ENCODE measurements at regions of chr17 and their contacts with region 1.

Region 1: DNA sequence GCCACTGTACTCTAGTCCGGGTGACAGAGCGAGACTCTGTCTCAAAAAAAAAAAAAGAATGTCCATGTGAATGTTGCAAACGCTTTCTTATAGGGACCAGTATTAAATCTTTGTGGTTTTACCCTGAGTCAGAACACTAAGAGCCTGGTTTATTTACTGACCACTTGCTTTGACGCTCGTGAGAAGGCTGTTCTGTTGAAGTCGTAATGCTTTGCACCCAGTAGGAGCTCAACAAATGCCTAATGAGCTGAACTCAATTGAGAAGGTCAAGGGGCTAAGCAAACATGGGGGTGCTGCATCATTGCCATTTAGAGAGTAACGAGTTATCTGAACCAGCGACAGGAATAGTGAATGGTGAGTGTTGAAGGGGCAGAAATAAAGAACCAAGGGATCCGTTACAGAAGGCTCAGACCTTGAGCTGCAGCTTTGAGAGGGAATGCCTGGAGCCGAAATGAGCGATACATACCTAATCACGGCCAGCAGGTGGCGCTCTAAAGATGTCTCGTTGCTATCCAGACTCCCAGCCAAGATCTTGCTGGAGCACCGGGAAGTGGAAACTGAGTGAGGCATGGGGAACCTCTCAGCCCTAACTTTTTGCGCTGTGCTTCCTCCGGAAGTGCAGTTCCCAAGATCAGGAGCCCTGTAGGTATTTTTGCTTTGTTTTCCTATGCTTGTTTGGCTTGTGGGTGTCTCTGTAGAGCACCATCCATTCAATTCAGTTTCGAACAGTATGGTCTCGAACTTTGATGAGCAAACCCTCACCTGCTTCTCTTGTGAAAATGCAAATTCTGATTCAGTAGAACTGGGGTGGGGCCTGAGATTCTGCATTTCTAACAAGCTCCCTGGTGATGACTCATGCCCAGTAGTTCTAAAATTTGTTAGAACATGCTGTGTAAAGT is 12.6 kb upstream of the RNF222 start:
- DNase-seq: peak; percentile 65 to 91 (median 75)
- ATAC-seq: peak; percentile 85
- H3K4me3 ChIP-seq: no peak overlapping the region
- H3K4me3 Mint-ChIP-seq: no peak overlapping the region
- H3K27ac ChIP-seq: no peak overlapping the region
- H3K27ac Mint-ChIP-seq: no peak overlapping the region
- H3K4me1 ChIP-seq: peaks cover 16% of the 10 kb centered on the region
- H3K4me1 Mint-ChIP-seq: peaks cover 10% of the 10 kb centered on the region
- H3K27me3 ChIP-seq: peaks cover 0 to 7% of the 10 kb centered on the region in 2 experiments
- H3K27me3 Mint-ChIP-seq: peaks cover 9% of the 10 kb centered on the region
- CTCF ChIP-seq: peak; percentile 96

Region 2: DNA sequence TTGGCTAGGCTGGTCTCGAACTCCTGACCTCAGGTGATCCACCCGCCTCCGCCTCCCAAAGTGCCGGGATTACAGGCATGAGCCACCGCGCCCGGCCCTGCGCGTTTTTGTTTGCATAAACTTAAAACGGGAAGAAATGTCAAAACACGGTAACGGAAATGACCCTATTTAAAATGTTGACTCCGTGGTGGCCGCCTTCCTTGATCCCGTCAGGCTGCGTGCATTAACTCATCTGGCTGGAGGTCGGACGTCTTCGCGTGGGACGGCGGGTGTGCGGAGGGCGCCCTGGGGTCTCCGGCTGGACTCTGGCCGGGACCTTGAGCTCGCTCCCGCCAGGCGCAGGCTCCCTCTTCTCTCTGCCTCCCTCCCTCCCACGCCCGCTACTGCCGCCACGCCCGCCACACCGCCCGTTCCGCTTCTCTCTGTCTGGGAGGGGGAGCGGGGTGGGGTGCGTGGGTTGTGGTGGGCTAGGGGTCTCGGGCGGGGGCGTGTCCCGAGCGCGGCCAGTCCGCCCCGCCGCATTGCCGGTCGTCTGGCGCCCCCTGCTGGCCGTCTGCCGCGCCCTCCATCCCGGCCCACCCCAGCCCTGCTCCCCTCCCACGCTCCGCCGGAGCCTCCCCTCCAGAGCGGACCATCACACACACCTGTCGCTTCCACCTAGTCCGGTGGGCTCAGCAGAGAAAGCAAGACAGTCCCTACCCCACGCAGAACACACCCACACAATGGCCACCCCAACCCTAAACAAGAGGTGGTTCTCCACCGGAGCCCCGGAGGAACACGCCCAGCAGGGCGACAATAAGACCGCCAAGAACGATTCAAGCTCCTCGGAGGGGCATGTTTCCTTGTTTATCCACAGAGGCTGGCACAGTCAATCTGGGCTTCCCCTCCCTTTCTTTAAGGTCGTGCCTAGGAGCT is 335.6 kb after region 1 on chr17:
- CTCF ChIA-PET with region 1: interaction called, 11 read pairs
- POLR2A ChIA-PET with region 1: interaction called, 6 read pairs
- intact Hi-C with region 1: loop called (anchors 1 to 2 kb)
- DNase-seq: peak; percentile 64 to 88 (median 76)
- ATAC-seq: peak; percentile 80
- H3K4me3 ChIP-seq: peak overlapping the region; percentile 78
- H3K4me3 Mint-ChIP-seq: peak overlapping the region; percentile 93
- H3K27ac ChIP-seq: peak overlapping the region; percentile 44 to 51
- H3K27ac Mint-ChIP-seq: peak overlapping the region; percentile 83
- H3K4me1 ChIP-seq: peaks cover 23% of the 10 kb centered on the region
- H3K4me1 Mint-ChIP-seq: peaks cover 12% of the 10 kb centered on the region
- H3K27me3 ChIP-seq: no peaks in the 10 kb centered on the region
- H3K27me3 Mint-ChIP-seq: no peaks in the 10 kb centered on the region
- CTCF ChIP-seq: peak; percentile 99

Region 3: DNA sequence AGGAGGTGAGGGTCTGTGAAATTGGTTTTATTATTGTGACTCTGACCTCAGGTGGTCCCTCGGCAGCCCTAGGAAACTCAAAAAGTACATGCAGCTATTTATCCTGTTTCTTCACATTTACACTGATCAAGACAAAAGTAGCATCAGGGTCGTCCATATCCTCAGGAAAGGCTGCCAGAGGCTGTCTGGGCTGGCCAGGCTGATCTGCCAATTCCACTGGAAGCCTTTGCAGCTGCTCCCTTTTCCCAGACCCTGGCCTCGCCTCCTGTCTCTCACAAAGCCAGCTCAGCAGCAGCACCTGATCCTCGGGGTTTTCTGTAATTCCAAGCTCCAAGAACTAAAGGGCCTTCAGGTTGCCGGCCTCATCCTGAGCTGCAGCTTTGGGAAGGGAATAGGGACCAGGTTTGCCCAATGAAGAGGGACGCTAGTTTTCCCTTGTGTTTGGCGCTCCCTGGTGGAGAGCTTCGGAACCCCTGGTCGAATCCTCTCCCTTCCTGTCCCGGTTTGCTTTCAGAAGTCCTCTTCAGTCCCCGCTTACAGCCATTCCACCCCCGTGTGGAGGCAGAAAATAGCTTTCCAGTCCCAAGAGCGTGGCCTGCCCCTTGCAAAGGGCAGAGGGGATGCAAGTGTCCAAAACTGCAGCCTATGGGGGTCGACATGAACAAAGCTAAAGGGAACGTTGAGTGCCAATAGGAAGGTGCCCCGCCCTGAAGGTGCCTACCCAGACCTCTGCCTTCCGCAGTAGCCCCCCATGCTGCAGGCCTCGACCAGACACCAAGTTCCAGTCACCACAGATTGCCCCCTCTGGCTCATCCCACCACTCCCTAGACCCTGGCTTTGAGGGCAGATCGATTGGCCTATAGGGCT is 375.6 kb after region 1 on chr17:
- CTCF ChIA-PET with region 1: no interaction called
- POLR2A ChIA-PET with region 1: no interaction called
- intact Hi-C with region 1: loop called (anchors 2 kb)
- DNase-seq: peak; percentile 35 to 73 (median 55)
- ATAC-seq: peak; percentile 44
- H3K4me3 ChIP-seq: no peak overlapping the region
- H3K4me3 Mint-ChIP-seq: no peak overlapping the region
- H3K27ac ChIP-seq: no peak overlapping the region
- H3K27ac Mint-ChIP-seq: no peak overlapping the region
- H3K4me1 ChIP-seq: peaks cover 6% of the 10 kb centered on the region
- H3K4me1 Mint-ChIP-seq: no peaks in the 10 kb centered on the region
- H3K27me3 ChIP-seq: no peaks in the 10 kb centered on the region
- H3K27me3 Mint-ChIP-seq: no peaks in the 10 kb centered on the region
- CTCF ChIP-seq: peak; percentile 73

Measured in CD4-positive, alpha-beta T cell (primary cell).